BJ (cell line): ENCODE measurements at regions of chr7 and their contacts with region 1.

Region 1: DNA sequence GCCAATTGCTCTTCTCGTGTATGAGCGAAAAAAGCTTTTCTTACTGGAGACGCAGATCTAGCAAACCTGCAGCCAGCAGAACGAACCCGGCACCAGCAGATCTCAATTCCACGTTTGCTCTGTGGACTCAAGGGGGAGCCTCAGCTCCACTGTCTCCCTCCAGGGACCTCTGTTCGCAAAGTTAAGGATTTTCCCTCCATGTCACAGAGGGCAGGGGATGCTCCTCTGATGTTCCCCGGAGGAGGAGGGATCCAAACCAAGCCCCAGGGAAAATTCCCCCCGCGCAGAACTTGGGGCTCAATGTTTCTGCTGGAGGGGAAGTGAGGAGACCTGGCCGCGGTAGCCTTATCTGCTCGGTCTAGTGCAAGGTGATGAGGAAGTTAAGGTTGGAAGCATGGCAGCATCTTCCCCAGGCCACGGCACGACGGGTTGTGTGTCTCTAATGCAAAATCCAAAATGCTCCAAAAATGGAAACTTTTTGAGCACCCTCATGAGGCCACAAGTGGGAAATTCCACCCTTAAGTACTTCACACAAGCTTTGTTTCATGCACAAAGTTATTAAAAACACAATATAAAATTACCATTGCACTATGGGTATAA is 9.0 kb downstream of the IQCE start:
- DNase-seq: no peak
- H3K4me3 ChIP-seq: no peak overlapping the region
- H3K27me3 ChIP-seq: no peaks in the 10 kb centered on the region
- CTCF ChIP-seq: peak; percentile 76

Region 2: DNA sequence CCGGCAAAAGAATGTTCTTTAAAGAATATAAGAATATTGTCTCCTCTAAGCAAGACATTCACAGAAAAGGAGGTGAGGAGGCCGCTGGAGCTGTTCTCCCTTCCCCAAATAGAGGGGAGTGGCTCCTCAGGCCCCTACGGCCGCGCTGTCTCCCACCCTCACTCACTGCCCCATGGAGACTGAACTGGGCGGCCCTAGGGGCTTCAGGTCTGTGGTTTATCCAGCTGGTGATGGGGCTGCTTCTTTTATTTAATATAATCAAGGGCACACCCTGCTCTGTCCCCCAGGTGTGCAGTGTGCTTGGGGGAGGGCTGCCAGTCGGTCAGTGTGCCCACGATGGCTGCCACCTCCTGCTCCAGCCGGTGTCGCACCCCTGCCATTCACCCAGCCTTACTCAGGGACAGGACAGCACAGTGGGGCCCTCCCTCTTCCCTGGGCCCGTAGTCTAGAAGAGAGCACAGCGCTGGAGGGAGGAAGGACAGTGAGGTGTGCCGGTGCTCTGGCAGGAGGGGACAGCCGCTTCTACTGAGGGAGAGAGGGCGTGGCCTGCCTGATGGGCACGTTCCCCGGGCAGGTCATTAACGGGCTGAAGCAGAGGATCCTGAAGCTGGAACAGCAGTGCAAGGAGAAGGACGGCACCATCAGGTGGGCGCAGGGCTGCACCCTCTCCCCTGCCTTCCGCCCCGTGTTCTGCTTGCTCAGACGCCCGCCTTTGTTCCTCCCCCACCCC is 14.4 kb after region 1 on chr7:
- CTCF ChIA-PET with region 1: interaction called, 12 read pairs
- POLR2A ChIA-PET with region 1: no interaction called
- DNase-seq: no peak
- H3K4me3 ChIP-seq: no peak overlapping the region
- H3K27me3 ChIP-seq: no peaks in the 10 kb centered on the region
- CTCF ChIP-seq: no peak